Activated CD4-positive, alpha-beta T cell treated with anti-CD3 and anti-CD28 coated beads for 36 hours (primary cell): ENCODE measurements at regions of chr17 and their contacts with region 1.

Region 1: GRCh38 chr17:17943281-17943984 is 28.8 kb downstream of the TOM1L2 start:
- DNase-seq: no peak
- ATAC-seq: peak; percentile 46
- H3K4me3 Mint-ChIP-seq: no peak overlapping the region
- H3K27ac Mint-ChIP-seq: peak overlapping the region; percentile 3
- H3K4me1 Mint-ChIP-seq: peaks cover 27% of the 10 kb centered on the region
- H3K27me3 Mint-ChIP-seq: no peaks in the 10 kb centered on the region

Region 2: GRCh38 chr17:17836250-17836817 is 107.1 kb before region 1 on chr17:
- CTCF ChIA-PET with region 1: no interaction called
- POLR2A ChIA-PET with region 1: no interaction called
- intact Hi-C with region 1: no loop called
- DNase-seq: peak; percentile 99
- ATAC-seq: peak; percentile 74
- H3K4me3 Mint-ChIP-seq: peak overlapping the region; percentile 94
- H3K27ac Mint-ChIP-seq: peak overlapping the region; percentile 98
- H3K4me1 Mint-ChIP-seq: peaks cover 74% of the 10 kb centered on the region
- H3K27me3 Mint-ChIP-seq: no peaks in the 10 kb centered on the region

Region 3: GRCh38 chr17:18004884-18005305 is 61.5 kb after region 1 on chr17:
- CTCF ChIA-PET with region 1: interaction called, 3 read pairs
- POLR2A ChIA-PET with region 1: interaction called, 12 read pairs
- intact Hi-C with region 1: no loop called
- DNase-seq: no peak
- ATAC-seq: no peak
- H3K4me3 Mint-ChIP-seq: no peak overlapping the region
- H3K27ac Mint-ChIP-seq: no peak overlapping the region
- H3K4me1 Mint-ChIP-seq: no peaks in the 10 kb centered on the region
- H3K27me3 Mint-ChIP-seq: no peaks in the 10 kb centered on the region